ENCODE measurements at regions of chr6 and their contacts with region 1.

Region 1: GRCh38 chr6:134870677-134871498 is 79.0 kb downstream of the ALDH8A1 start:
- DNase-seq: no peak
- H3K4me3 ChIP-seq: no peak overlapping the region
- H3K27ac ChIP-seq: no peak overlapping the region
- H3K27me3 ChIP-seq: no peaks in the 10 kb centered on the region
- CTCF ChIP-seq: no peak

Region 2: GRCh38 chr6:134830940-134831339 is 39.9 kb before region 1 on chr6:
- intact Hi-C with region 1: loop called in 1 of 2 experiments (anchors 5 kb)
- DNase-seq: no peak
- H3K4me3 ChIP-seq: no peak overlapping the region
- H3K27ac ChIP-seq: peak overlapping the region in 1 of 59 donors; percentile 18
- H3K27me3 ChIP-seq: no peaks in the 10 kb centered on the region
- CTCF ChIP-seq: no peak

Region 3: DNA sequence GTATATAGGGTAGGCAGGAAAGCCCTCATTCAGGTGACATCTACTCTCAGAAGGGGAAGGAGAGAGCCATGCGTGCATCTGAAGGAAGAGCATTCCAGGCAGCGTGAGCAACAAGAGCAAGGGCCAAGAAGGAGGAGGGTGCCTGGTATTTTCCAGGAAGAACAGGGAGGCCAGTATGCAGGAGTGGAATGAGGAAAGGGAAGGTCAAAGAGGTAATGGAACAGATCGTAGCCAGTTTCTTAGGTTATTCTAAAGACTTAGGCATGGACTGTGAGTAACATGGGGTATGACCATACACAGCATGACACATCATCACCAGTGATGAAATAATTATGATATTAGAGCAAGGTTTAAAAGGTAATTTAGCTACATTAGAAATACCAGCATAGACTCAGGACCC is 54.9 kb after region 1 on chr6:
- intact Hi-C with region 1: no loop called
- DNase-seq: no peak
- H3K4me3 ChIP-seq: no peak overlapping the region
- H3K27ac ChIP-seq: no peak overlapping the region
- H3K27me3 ChIP-seq: no peaks in the 10 kb centered on the region
- CTCF ChIP-seq: no peak